Ascending aorta (tissue), 2 donors: ENCODE measurements at regions of chr14 and their contacts with region 1.

Region 1: GRCh38 chr14:68466491-68467032 is 326.3 kb downstream of the ZFP36L1 start:
- DNase-seq: peak in 1 of 2 donors; percentile 66
- H3K4me3 ChIP-seq: no peak overlapping the region
- H3K27ac ChIP-seq: peak overlapping the region; percentile 6 to 33
- H3K4me1 ChIP-seq: peaks cover 3 to 20% of the 10 kb centered on the region in 2 donors
- H3K27me3 ChIP-seq: no peaks in the 10 kb centered on the region
- CTCF ChIP-seq: no peak

Region 2: GRCh38 chr14:68172627-68173026 is 293.9 kb before region 1 on chr14:
- intact Hi-C with region 1: no loop called
- DNase-seq: no peak
- H3K4me3 ChIP-seq: no peak overlapping the region
- H3K27ac ChIP-seq: no peak overlapping the region
- H3K4me1 ChIP-seq: peaks cover 0 to 3% of the 10 kb centered on the region in 2 donors
- H3K27me3 ChIP-seq: no peaks in the 10 kb centered on the region
- CTCF ChIP-seq: no peak

Region 3: GRCh38 chr14:68506021-68506644 is 39.6 kb after region 1 on chr14:
- intact Hi-C with region 1: loop called (anchors 5 kb)
- DNase-seq: no peak
- H3K4me3 ChIP-seq: no peak overlapping the region
- H3K27ac ChIP-seq: peak overlapping the region; percentile 38 to 44
- H3K4me1 ChIP-seq: peaks cover 13 to 28% of the 10 kb centered on the region in 2 donors
- H3K27me3 ChIP-seq: no peaks in the 10 kb centered on the region
- CTCF ChIP-seq: no peak